Activated CD4-positive, alpha-beta T cell treated with anti-CD3 and anti-CD28 coated beads, Interleukin-2, amount 10 ng/mL, durations not matched to agents 24 days and 14 days (primary cell): ENCODE measurements at regions of chr4 and their contacts with region 1.

Region 1: GRCh38 chr4:113394730-113395530 is 345.5 kb downstream of the ANK2 start:
- DNase-seq: peak; percentile 90
- H3K4me3 Mint-ChIP-seq: no peak overlapping the region
- H3K27ac Mint-ChIP-seq: no peak overlapping the region
- H3K4me1 Mint-ChIP-seq: peaks cover 2% of the 10 kb centered on the region
- H3K27me3 Mint-ChIP-seq: peaks cover 5% of the 10 kb centered on the region

Region 2: GRCh38 chr4:113328514-113328913 is 66.4 kb before region 1 on chr4:
- intact Hi-C with region 1: no loop called
- DNase-seq: no peak
- H3K4me3 Mint-ChIP-seq: no peak overlapping the region
- H3K27ac Mint-ChIP-seq: no peak overlapping the region
- H3K4me1 Mint-ChIP-seq: no peaks in the 10 kb centered on the region
- H3K27me3 Mint-ChIP-seq: peaks cover 25% of the 10 kb centered on the region

Region 3: GRCh38 chr4:113358784-113359183 is 36.1 kb before region 1 on chr4:
- intact Hi-C with region 1: no loop called
- DNase-seq: no peak
- H3K4me3 Mint-ChIP-seq: no peak overlapping the region
- H3K27ac Mint-ChIP-seq: no peak overlapping the region
- H3K4me1 Mint-ChIP-seq: peaks cover 20% of the 10 kb centered on the region
- H3K27me3 Mint-ChIP-seq: peaks cover 24% of the 10 kb centered on the region

Region 4: GRCh38 chr4:113445286-113445685 is 50.4 kb after region 1 on chr4:
- intact Hi-C with region 1: loop called (anchors 10 kb)
- DNase-seq: no peak
- H3K4me3 Mint-ChIP-seq: no peak overlapping the region
- H3K27ac Mint-ChIP-seq: peak overlapping the region; percentile 66
- H3K4me1 Mint-ChIP-seq: peaks cover 28% of the 10 kb centered on the region
- H3K27me3 Mint-ChIP-seq: peaks cover 1% of the 10 kb centered on the region

Region 5: GRCh38 chr4:113547487-113548042 is 152.6 kb after region 1 on chr4:
- intact Hi-C with region 1: loop called (anchors 2 kb)
- DNase-seq: peak; percentile 96
- H3K4me3 Mint-ChIP-seq: peak overlapping the region; percentile 17
- H3K27ac Mint-ChIP-seq: peak overlapping the region; percentile 25
- H3K4me1 Mint-ChIP-seq: peaks cover 23% of the 10 kb centered on the region
- H3K27me3 Mint-ChIP-seq: no peaks in the 10 kb centered on the region

Region 6: DNA sequence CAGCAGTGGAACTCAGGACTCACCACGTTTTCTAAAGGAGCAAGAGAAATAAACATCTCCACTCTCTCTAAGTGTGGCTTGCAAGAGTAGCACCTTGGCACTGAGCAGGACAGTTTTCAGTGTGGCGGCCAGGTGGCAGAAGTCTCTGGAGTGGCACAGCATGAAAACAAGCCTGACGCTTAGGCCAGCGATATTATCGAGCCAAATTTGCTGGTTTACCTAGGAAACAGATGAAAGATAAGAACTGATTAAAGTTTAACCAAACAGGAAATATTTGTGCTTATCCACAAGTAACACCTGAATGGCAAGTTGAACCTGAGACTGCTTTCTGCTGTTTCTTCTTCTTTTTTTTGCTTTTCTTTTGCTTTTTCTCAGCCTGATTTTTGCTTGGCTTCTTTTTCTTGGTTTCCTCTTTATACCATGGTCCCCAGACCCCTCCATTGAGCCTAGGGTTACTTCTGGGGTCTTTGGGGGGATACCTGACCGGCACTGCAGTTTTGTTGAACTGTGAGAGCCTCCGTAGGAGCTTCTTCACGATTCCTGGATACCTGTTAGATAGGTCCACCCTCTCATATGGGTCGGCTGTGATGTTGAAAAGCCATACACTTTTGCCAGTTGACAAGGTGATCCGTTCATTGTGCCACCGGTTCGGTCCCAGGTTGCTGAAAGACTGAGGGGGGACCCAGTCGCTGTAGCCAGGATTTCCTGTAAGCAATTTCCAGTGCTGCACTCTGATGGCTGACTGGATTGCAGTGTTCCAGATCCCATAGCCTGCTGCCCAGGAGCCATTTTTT is 507.3 kb after region 1 on chr4:
- intact Hi-C with region 1: loop called (anchors 10 kb)
- DNase-seq: peak; percentile 82
- H3K4me3 Mint-ChIP-seq: peak overlapping the region; percentile 38
- H3K27ac Mint-ChIP-seq: peak overlapping the region; percentile 37
- H3K4me1 Mint-ChIP-seq: peaks cover 27% of the 10 kb centered on the region
- H3K27me3 Mint-ChIP-seq: no peaks in the 10 kb centered on the region

Region 7: GRCh38 chr4:114180481-114180880 is 785.6 kb after region 1 on chr4:
- intact Hi-C with region 1: loop called (anchors 1 kb)
- DNase-seq: no peak
- H3K4me3 Mint-ChIP-seq: no peak overlapping the region
- H3K27ac Mint-ChIP-seq: no peak overlapping the region
- H3K4me1 Mint-ChIP-seq: no peaks in the 10 kb centered on the region
- H3K27me3 Mint-ChIP-seq: no peaks in the 10 kb centered on the region

Region 8: DNA sequence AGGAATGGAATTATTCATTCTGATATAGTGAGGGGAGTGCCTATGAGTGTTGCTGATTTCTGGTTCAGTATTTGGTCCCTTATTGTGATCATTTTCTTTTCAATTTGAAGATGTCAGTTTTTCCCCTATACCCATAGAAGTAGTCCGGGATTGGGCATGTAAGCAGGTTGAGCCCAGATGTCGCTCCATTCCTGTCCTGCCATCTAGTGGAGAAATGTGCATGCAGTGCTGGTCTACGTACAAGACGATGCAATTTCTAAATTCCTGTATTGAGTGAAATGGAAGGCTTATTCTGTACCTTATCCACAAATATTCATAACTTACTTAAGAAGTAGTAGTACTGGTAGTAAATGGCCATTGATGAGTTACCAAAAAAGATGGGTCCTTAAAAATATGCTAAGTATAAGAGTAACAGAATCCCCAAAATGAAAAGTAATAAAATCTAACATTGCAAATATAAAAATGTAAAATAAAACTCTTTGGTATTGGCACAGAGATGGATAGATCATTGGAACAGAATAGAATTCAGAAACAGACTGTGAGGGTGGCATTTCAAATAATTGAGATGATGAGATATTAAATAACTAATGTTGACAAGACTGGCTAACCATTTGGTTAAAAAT is 1264.6 kb after region 1 on chr4:
- intact Hi-C with region 1: loop called (anchors 2 kb)
- DNase-seq: peak; percentile 74
- H3K4me3 Mint-ChIP-seq: no peak overlapping the region
- H3K27ac Mint-ChIP-seq: no peak overlapping the region
- H3K4me1 Mint-ChIP-seq: no peaks in the 10 kb centered on the region
- H3K27me3 Mint-ChIP-seq: peaks cover 5% of the 10 kb centered on the region